ENCODE measurements at regions of chr14 and their contacts with region 1.

Region 1: GRCh38 chr14:75497191-75497590 is 25.1 kb upstream of the BATF start:
- DNase-seq: no peak
- ATAC-seq: peak; percentile 43
- H3K4me3 ChIP-seq: no peak overlapping the region
- H3K27ac ChIP-seq: peak overlapping the region; percentile 54
- H3K4me1 ChIP-seq: peaks cover 65% of the 10 kb centered on the region
- H3K27me3 ChIP-seq: no peaks in the 10 kb centered on the region
- CTCF ChIP-seq: no peak
- EP300 ChIP-seq: 0 out of 4 replicates have a peak, but pooled peaks of 1 of the 2 experiments have one; percentile 25
- POLR2A ChIP-seq: no peak
- RAD21 ChIP-seq: peak; percentile 41

Region 2: GRCh38 chr14:75138492-75138891 is 358.7 kb before region 1 on chr14:
- CTCF ChIA-PET with region 1: no interaction called
- POLR2A ChIA-PET with region 1: no interaction called
- RAD21 ChIA-PET with region 1: no interaction called
- SMC1A ChIA-PET with region 1: no interaction called
- in situ Hi-C with region 1: no loop called
- intact Hi-C with region 1: no loop called
- DNase-seq: no peak
- ATAC-seq: peak; percentile 62
- H3K4me3 ChIP-seq: no peak overlapping the region
- H3K27ac ChIP-seq: peak overlapping the region; percentile 48
- H3K4me1 ChIP-seq: peaks cover 18% of the 10 kb centered on the region
- H3K27me3 ChIP-seq: no peaks in the 10 kb centered on the region
- CTCF ChIP-seq: no peak
- EP300 ChIP-seq: no peak
- POLR2A ChIP-seq: no peak
- RAD21 ChIP-seq: no peak

Region 3: GRCh38 chr14:75476274-75476995 is 20.8 kb before region 1 on chr14:
- CTCF ChIA-PET with region 1: interaction called, 7 read pairs
- POLR2A ChIA-PET with region 1: interaction called, 3 read pairs
- RAD21 ChIA-PET with region 1: interaction called, 10 read pairs
- SMC1A ChIA-PET with region 1: interaction called, 10 read pairs
- in situ Hi-C with region 1: no loop called
- intact Hi-C with region 1: no loop called
- DNase-seq: no peak
- ATAC-seq: no peak
- H3K4me3 ChIP-seq: no peak overlapping the region
- H3K27ac ChIP-seq: no peak overlapping the region
- H3K4me1 ChIP-seq: peaks cover 29% of the 10 kb centered on the region
- H3K27me3 ChIP-seq: no peaks in the 10 kb centered on the region
- CTCF ChIP-seq: no peak
- EP300 ChIP-seq: no peak
- POLR2A ChIP-seq: no peak
- RAD21 ChIP-seq: no peak

Region 4: GRCh38 chr14:75522224-75522982 is 25.2 kb after region 1 on chr14 and contains the start of gene BATF:
- CTCF ChIA-PET with region 1: interaction called, 520 read pairs
- POLR2A ChIA-PET with region 1: interaction called, 385 read pairs
- RAD21 ChIA-PET with region 1: interaction called, 645 read pairs
- SMC1A ChIA-PET with region 1: interaction called, 619 read pairs
- in situ Hi-C with region 1: no loop called
- intact Hi-C with region 1: no loop called
- DNase-seq: no peak
- ATAC-seq: peak; percentile 58
- H3K4me3 ChIP-seq: peak within 1 kb of the TSS; percentile 95
- H3K27ac ChIP-seq: peak within 1 kb of the TSS; percentile 93
- H3K4me1 ChIP-seq: peaks cover 29% of the 10 kb centered on the region
- H3K27me3 ChIP-seq: no peaks in the 10 kb centered on the region
- CTCF ChIP-seq: no peak
- EP300 ChIP-seq: peak; percentile 22 to 42; a peak in 1 of 4 replicates
- POLR2A ChIP-seq: peak; percentile 98
- RAD21 ChIP-seq: peak; percentile 25; the same call in 1 of the 2 replicates
- polyA plus RNA-seq, gene BATF: 10.0 to 30.9 TPM

Region 5: GRCh38 chr14:75542588-75543091 is 45.4 kb after region 1 on chr14:
- CTCF ChIA-PET with region 1: interaction called, 12 read pairs
- POLR2A ChIA-PET with region 1: interaction called, 14 read pairs
- RAD21 ChIA-PET with region 1: interaction called, 111 read pairs
- SMC1A ChIA-PET with region 1: interaction called, 16 read pairs
- in situ Hi-C with region 1: no loop called
- intact Hi-C with region 1: loop called (anchors 10 kb)
- DNase-seq: no peak
- ATAC-seq: peak; percentile 84
- H3K4me3 ChIP-seq: peak overlapping the region; percentile 52
- H3K27ac ChIP-seq: peak overlapping the region; percentile 96
- H3K4me1 ChIP-seq: peaks cover 60% of the 10 kb centered on the region
- H3K27me3 ChIP-seq: no peaks in the 10 kb centered on the region
- CTCF ChIP-seq: no peak
- EP300 ChIP-seq: no peak
- POLR2A ChIP-seq: peak; percentile 64
- RAD21 ChIP-seq: no peak

Region 6: GRCh38 chr14:75549169-75549568 is 52.0 kb after region 1 on chr14:
- CTCF ChIA-PET with region 1: interaction called, 6 read pairs
- POLR2A ChIA-PET with region 1: interaction called, 5 read pairs
- RAD21 ChIA-PET with region 1: interaction called, 11 read pairs
- SMC1A ChIA-PET with region 1: interaction called, 12 read pairs
- in situ Hi-C with region 1: no loop called
- intact Hi-C with region 1: loop called (anchors 10 kb)
- DNase-seq: peak; percentile 79
- ATAC-seq: peak; percentile 87
- H3K4me3 ChIP-seq: no peak overlapping the region; the same call in 1 of the 2 replicates
- H3K27ac ChIP-seq: peak overlapping the region; percentile 53
- H3K4me1 ChIP-seq: peaks cover 23% of the 10 kb centered on the region
- H3K27me3 ChIP-seq: no peaks in the 10 kb centered on the region
- CTCF ChIP-seq: no peak
- EP300 ChIP-seq: peak in 1 of 2 experiments; percentile 49; a peak in 1 of 4 replicates
- POLR2A ChIP-seq: no peak
- RAD21 ChIP-seq: peak; percentile 7; the same call in 1 of the 2 replicates

Region 7: DNA sequence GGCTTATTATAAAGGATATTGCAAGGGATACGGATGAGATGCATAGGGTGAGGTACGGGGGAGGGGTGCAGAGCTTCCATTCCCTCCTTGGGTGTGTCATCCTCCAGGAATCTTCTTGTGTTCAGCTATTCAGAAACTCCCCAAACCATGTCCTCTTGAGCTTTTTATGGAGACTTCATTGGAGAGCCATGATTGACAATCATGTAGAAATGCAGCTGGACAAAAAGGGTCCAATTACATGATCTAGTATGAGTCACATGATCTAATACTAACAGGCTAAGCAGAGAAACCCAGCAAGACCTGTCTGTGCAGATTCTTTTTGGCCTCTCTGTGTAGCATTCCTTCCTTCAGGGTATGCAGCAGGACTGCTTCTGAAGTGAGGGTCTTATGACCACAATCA is 57.3 kb after region 1 on chr14:
- CTCF ChIA-PET with region 1: interaction called, 180 read pairs
- POLR2A ChIA-PET with region 1: interaction called, 5 read pairs
- RAD21 ChIA-PET with region 1: interaction called, 113 read pairs
- SMC1A ChIA-PET with region 1: interaction called, 136 read pairs
- in situ Hi-C with region 1: no loop called
- intact Hi-C with region 1: loop called (anchors 10 kb)
- DNase-seq: no peak
- ATAC-seq: no peak
- H3K4me3 ChIP-seq: no peak overlapping the region
- H3K27ac ChIP-seq: no peak overlapping the region
- H3K4me1 ChIP-seq: peaks cover 6% of the 10 kb centered on the region
- H3K27me3 ChIP-seq: no peaks in the 10 kb centered on the region
- CTCF ChIP-seq: no peak
- EP300 ChIP-seq: no peak
- POLR2A ChIP-seq: no peak
- RAD21 ChIP-seq: no peak

Region 8: DNA sequence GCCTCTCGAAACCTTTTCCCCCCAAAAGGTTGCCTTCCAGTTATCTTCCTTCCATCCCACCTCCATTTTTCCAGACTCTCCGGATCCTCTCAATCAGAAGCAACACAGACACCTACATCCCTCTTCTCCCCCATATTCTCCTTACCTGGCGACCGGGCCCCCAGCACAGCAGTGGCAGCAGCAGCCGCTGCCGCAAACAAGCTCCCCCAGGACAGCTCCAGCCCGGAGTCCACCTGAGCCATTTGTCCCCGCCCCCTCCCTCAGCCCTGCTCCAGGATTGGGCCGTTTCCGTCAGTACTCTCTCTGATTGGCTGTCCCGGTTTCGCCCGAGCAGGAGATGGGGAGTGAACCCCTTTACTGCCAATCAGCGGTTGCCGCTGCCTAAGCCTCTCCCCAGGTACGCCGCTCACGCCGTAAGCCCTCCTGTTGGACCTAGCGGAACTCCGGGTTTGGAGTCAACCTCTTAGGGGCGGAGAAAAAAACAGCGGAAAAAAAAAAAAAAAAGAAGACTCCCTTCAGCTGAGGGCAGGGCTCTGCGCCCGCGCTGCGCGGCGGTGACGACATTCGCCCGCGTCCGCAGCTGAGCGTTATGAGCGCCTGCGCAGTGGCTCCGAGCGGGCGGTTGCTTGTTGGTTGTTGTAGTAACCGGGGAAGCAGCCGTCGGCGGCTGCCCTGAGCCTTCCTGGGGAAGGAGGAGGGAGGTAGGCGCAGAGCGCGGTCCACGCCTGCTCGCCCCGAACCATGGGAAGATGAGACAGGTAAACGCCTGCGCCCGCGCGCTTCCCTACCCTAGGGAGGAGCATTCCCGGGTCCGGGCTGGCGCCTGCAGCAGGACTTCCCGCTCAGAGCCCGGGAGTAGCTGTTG is 163.7 kb after region 1 on chr14 and contains the starts of genes ERG28 and TTLL5:
- CTCF ChIA-PET with region 1: interaction called, 81 read pairs
- POLR2A ChIA-PET with region 1: interaction called, 5 read pairs
- RAD21 ChIA-PET with region 1: interaction called, 9 read pairs
- SMC1A ChIA-PET with region 1: interaction called, 4 read pairs
- in situ Hi-C with region 1: no loop called
- intact Hi-C with region 1: loop called (anchors 5 kb)
- DNase-seq: peak; percentile 99
- ATAC-seq: peak; percentile 99
- H3K4me3 ChIP-seq: peak within 1 kb of the TSS; percentile 89
- H3K27ac ChIP-seq: peak within 1 kb of the TSS; percentile 49
- H3K4me1 ChIP-seq: no peaks in the 10 kb centered on the region
- H3K27me3 ChIP-seq: no peaks in the 10 kb centered on the region
- CTCF ChIP-seq: no peak
- EP300 ChIP-seq: 0 out of 4 replicates have a peak, but pooled peaks of 1 of the 2 experiments have one; percentile 16
- POLR2A ChIP-seq: peak; percentile 82
- RAD21 ChIP-seq: no peak
- polyA plus RNA-seq, gene ERG28: 52.6 to 67.0 TPM
- polyA plus RNA-seq, gene TTLL5: 3.2 to 5.2 TPM

Measured in GM12878 (cell line).